Colonic mucosa (tissue), 4 donors: ENCODE measurements at regions of chr5 and their contacts with region 1.

Region 1: GRCh38 chr5:163564321-163564938 is 59.0 kb downstream of the MAT2B start:
- DNase-seq: peak; percentile 70
- H3K4me3 ChIP-seq: no peak overlapping the region
- H3K27ac ChIP-seq: no peak overlapping the region
- H3K4me1 ChIP-seq: no peaks in the 10 kb centered on the region
- H3K27me3 ChIP-seq: no peaks in the 10 kb centered on the region
- CTCF ChIP-seq: peak; percentile 87

Region 2: DNA sequence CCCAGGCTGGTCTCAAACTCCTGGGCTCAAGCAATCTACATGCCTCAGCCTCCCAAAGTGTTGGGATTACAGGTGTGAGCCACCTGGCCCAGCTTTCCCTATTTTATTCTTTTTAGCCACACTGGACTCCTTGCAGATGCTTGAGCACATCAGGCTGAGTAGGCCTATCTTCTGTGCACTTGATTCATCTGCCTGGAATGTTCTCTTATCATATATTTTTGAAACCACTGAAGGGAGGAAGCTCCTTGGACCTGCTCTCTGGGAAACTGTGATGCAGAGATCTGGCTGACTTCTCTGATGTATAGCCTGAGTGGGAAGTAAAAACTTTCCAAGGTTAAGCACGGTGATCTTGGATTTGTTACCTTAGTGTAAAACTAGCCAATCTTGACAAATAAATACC is 65.5 kb before region 1 on chr5:
- intact Hi-C with region 1: no loop called
- DNase-seq: no peak
- H3K4me3 ChIP-seq: no peak overlapping the region
- H3K27ac ChIP-seq: no peak overlapping the region
- H3K4me1 ChIP-seq: no peaks in the 10 kb centered on the region
- H3K27me3 ChIP-seq: no peaks in the 10 kb centered on the region
- CTCF ChIP-seq: no peak

Region 3: DNA sequence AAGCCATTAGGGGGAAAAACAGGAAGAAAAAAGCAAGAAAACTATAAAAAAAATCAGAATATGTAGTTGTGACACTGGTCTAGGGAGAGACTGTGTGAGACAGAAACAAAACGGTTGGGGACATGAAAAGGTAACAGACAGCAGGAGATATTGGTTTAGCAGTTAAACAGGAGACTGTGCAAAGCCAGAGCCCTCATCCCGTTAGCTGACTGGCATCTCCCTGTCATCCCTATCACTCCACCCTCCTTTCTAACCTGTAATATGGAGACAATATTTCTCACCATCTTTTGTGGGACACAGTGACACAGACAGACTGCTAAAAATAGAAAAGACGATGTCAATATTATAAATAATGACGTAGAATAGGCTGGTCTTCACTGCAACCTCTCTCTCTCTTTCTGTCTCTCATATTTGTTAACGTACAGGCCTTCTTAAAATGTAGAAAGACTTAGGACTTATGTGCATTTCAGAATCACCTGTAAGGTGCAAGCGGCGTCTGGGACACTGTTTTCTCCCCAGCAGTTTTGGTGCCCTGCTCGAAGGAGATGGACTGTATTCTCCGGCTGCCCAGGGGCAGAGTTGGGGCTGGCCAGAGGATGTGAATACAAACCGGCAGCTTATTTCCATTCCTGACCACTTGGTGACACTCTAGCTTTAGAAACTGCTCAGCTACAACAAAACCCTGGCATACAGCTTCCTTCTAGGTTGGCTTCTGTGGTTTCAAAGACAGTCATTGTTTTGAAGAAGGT is 131.6 kb after region 1 on chr5:
- intact Hi-C with region 1: loop called (anchors 2 kb)
- DNase-seq: peak; percentile 39
- H3K4me3 ChIP-seq: no peak overlapping the region
- H3K27ac ChIP-seq: no peak overlapping the region
- H3K4me1 ChIP-seq: no peaks in the 10 kb centered on the region
- H3K27me3 ChIP-seq: no peaks in the 10 kb centered on the region
- CTCF ChIP-seq: peak; percentile 64

Region 4: GRCh38 chr5:164013077-164013670 is 448.7 kb after region 1 on chr5:
- intact Hi-C with region 1: loop called (anchors 5 kb)
- DNase-seq: peak; percentile 59
- H3K4me3 ChIP-seq: no peak overlapping the region
- H3K27ac ChIP-seq: no peak overlapping the region
- H3K4me1 ChIP-seq: no peaks in the 10 kb centered on the region
- H3K27me3 ChIP-seq: no peaks in the 10 kb centered on the region
- CTCF ChIP-seq: peak; percentile 35

Region 5: GRCh38 chr5:164475339-164475977 is 911.0 kb after region 1 on chr5:
- intact Hi-C with region 1: loop called (anchors 10 kb)
- DNase-seq: no peak
- H3K4me3 ChIP-seq: no peak overlapping the region
- H3K27ac ChIP-seq: no peak overlapping the region
- H3K4me1 ChIP-seq: no peaks in the 10 kb centered on the region
- H3K27me3 ChIP-seq: no peaks in the 10 kb centered on the region
- CTCF ChIP-seq: peak; percentile 20

Region 6: GRCh38 chr5:164504141-164504772 is 939.8 kb after region 1 on chr5:
- intact Hi-C with region 1: loop called (anchors 2 kb)
- DNase-seq: peak; percentile 37
- H3K4me3 ChIP-seq: no peak overlapping the region
- H3K27ac ChIP-seq: no peak overlapping the region
- H3K4me1 ChIP-seq: no peaks in the 10 kb centered on the region
- H3K27me3 ChIP-seq: no peaks in the 10 kb centered on the region
- CTCF ChIP-seq: peak; percentile 64

Region 7: DNA sequence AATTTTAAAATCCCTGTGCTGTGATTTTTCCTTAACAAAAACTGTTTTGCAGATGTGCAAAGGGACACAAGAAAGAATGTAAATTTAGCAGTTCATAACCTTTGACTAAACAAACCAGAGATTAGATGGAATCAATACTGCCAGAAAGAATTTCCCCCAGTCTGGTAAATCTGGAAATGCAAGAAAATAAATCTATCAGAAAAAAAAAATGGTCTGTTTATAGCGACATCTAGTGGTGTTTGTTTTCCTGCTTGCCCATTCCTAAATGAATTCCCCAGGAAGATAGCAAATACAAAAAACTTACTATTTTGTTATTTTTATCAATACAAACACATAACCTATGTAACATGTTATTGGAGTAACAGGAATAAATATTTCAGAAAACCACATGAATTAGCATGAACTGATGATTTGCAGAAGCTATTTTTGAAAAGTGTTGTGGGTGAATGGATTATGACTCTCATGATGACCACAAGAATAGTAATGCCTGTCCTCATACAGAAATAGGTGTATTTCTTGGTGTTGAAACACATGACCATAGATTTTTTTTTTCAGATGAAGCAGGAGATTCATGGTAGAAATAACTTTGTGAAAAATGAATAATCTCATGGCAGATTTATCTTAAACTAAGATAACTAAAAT is 1644.8 kb after region 1 on chr5:
- intact Hi-C with region 1: loop called (anchors 5 kb)
- DNase-seq: no peak
- H3K4me3 ChIP-seq: no peak overlapping the region
- H3K27ac ChIP-seq: no peak overlapping the region
- H3K4me1 ChIP-seq: no peaks in the 10 kb centered on the region
- H3K27me3 ChIP-seq: no peaks in the 10 kb centered on the region
- CTCF ChIP-seq: peak; percentile 68